Motor neuron (in vitro differentiated cells): ENCODE measurements at regions of chr2 and their contacts with region 1.

Region 1: GRCh38 chr2:188524519-188525113 is 232.9 kb downstream of the GULP1 start:
- ATAC-seq: peak in 4 of 8 experiments; percentile 24 to 68 (median 57)
- H3K4me3 ChIP-seq: no peak overlapping the region
- H3K27ac ChIP-seq: no peak overlapping the region
- H3K4me1 ChIP-seq: no peaks in the 10 kb centered on the region

Region 2: GRCh38 chr2:187581125-187581896 is 943.3 kb before region 1 on chr2:
- in situ Hi-C with region 1: loop called in 3 of 9 experiments (anchors 25 kb)
- ATAC-seq: peak in 3 of 8 experiments; percentile 39 to 50 (median 46)
- H3K4me3 ChIP-seq: no peak overlapping the region
- H3K27ac ChIP-seq: no peak overlapping the region
- H3K4me1 ChIP-seq: no peaks in the 10 kb centered on the region

Region 3: DNA sequence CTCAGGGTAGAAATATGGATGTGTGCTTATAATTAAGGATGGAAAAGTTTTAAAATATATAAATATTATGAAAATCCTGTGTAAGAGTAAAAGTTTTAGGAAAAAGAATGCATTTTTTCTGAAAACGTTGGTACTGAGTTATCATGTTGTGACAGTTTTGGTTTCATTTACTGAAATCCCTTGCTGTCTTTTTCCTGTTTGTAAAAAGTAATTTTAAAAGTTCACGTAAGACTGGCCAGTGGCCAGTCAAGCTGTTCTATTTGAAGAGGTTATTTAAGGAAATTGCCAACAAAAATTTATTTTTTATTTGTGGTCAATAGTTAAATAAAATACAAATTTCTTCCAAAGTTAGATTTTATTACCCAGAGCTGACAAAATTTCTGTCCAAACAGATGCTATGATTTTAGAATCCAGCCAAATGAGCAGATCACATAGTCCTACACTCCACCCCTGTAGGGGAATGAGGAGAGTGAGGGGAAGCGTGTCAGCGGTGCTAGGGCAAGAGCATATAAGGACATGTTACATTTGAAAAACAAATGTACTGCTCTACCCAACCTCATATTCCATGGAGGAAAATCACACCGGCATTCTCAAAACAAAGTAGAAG is 672.6 kb before region 1 on chr2:
- in situ Hi-C with region 1: loop called in 2 of 9 experiments (anchors 25 kb)
- ATAC-seq: no peak
- H3K4me3 ChIP-seq: no peak overlapping the region
- H3K27ac ChIP-seq: no peak overlapping the region
- H3K4me1 ChIP-seq: no peaks in the 10 kb centered on the region

Region 4: GRCh38 chr2:188978291-188979081 is 453.9 kb after region 1 on chr2:
- in situ Hi-C with region 1: loop called in 2 of 9 experiments (anchors 10 to 25 kb)
- ATAC-seq: peak in 3 of 8 experiments; percentile 12 to 23 (median 21)
- H3K4me3 ChIP-seq: no peak overlapping the region
- H3K27ac ChIP-seq: no peak overlapping the region
- H3K4me1 ChIP-seq: no peaks in the 10 kb centered on the region